ENCODE measurements at regions of chr11 and their contacts with region 1.

Region 1: GRCh38 chr11:6096427-6096826 is 11.1 kb upstream of the OR56B4 start:
- DNase-seq: no peak

Region 2: GRCh38 chr11:6040874-6041273 is 55.6 kb before region 1 on chr11:
- intact Hi-C with region 1: loop called in 1 of 2 experiments (anchors 2 kb)
- DNase-seq: no peak

Region 3: DNA sequence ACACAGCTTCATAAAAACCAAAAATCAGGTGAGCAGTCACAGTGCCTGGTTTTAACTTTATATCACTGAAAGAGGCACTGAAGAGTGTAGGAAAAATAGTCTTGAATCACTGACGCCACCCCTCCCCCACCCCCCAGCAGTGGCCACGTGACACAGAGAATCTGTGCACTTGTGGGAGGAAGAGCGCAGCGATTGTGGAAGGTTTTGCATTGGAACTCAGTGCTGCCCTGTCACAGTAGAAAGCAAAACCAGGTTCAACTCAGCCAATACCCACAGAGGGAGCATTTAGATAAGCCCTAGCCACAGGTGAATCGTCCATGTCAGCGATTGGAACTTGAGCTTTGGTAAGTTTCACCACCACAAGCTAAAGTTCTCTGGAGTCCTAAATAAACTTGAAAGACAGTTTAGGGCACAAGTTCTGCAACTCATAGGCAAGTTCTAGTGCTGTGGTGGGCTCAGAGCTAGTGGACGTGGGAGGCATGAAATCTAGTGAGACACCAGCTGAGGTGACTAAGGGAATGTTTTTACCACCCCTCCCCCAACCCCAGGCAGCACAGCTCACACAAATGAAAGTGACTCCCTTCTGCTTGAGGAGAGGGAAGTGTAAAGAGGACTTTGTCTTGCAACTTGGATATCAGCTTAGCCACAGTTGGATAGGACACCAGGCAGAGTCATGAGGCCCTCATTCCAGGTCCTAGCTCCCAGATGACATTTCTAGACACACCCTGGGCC is 60.4 kb after region 1 on chr11:
- intact Hi-C with region 1: no loop called
- DNase-seq: no peak

Region 4: GRCh38 chr11:6191742-6192141 is 95.3 kb after region 1 on chr11:
- intact Hi-C with region 1: no loop called
- DNase-seq: no peak